ENCODE measurements at regions of chr4 and their contacts with region 1.

Region 1: DNA sequence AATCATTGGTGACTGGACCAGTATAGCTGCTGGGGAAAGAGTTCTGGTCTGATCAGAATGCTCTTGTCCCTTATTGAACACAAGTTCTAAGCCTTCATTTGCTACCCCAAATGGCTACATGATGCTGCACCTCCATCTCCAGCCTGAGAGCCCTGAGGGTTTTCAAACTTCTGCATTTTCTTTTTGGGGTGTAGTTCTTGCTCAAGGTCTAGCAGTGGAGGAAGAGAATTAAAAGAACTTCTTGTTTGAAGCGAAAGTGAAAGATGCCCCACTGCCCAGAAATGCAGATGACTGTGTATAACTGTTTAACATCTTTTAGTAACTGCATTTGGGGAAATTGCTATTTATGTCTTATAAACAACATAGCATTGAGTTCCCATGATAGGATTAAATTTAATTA is 38.5 kb downstream of the LAMTOR3 start:
- DNase-seq: no peak
- H3K4me3 Mint-ChIP-seq: peak overlapping the region; percentile 3
- H3K27ac Mint-ChIP-seq: peak overlapping the region; percentile 83
- H3K4me1 Mint-ChIP-seq: peaks cover 68% of the 10 kb centered on the region
- H3K27me3 Mint-ChIP-seq: no peaks in the 10 kb centered on the region

Region 2: GRCh38 chr4:99054428-99054994 is 801.2 kb before region 1 on chr4:
- intact Hi-C with region 1: loop called (anchors 2 kb)
- DNase-seq: no peak
- H3K4me3 Mint-ChIP-seq: no peak overlapping the region
- H3K27ac Mint-ChIP-seq: peak overlapping the region; percentile 75
- H3K4me1 Mint-ChIP-seq: peaks cover 41% of the 10 kb centered on the region
- H3K27me3 Mint-ChIP-seq: no peaks in the 10 kb centered on the region

Region 3: GRCh38 chr4:99504804-99505569 is 350.7 kb before region 1 on chr4:
- intact Hi-C with region 1: loop called (anchors 1 kb)
- DNase-seq: no peak
- H3K4me3 Mint-ChIP-seq: no peak overlapping the region
- H3K27ac Mint-ChIP-seq: no peak overlapping the region
- H3K4me1 Mint-ChIP-seq: peaks cover 32% of the 10 kb centered on the region
- H3K27me3 Mint-ChIP-seq: peaks cover 2% of the 10 kb centered on the region

Region 4: DNA sequence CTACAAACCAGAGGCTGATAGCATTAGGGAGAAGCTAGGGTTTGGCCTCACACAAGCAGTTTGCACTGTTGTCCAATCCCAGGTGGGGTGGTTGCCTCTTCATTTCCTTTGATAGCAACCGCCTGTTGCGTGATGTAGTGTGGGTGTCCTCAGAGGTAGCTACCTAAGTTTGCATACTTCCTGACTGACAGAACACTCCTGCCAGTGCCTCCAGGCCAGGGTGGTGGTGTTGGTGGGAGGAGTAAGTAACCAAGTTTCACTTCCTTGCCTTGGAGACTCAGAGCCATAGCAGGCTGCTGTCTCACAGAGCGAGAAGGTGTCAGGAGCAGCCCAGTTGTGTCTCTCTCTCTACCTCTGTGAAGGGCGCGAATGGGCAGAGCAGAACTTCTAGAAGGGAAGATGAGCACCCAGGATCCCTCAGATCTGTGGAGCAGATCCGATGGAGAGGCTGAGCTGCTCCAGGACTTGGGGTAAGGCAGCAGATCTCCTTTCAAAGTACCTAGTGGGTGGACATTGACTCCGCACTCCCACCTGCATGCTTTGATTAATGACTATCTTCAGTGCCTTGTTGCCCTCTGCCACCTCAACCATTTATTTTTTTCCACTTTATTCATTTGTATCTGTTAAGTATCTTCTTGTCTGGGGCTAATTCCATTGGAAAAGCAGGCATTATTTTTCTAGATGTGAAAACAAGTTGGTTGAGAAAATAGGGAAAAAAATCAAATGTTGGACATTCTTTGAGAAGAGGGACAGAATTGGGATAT is 39.0 kb before region 1 on chr4 and contains the start of gene DAPP1:
- intact Hi-C with region 1: loop called (anchors 1 kb)
- DNase-seq: peak; percentile 83
- H3K4me3 Mint-ChIP-seq: peak within 1 kb of the TSS; percentile 92
- H3K27ac Mint-ChIP-seq: peak within 1 kb of the TSS; percentile 94
- H3K4me1 Mint-ChIP-seq: peaks cover 73% of the 10 kb centered on the region
- H3K27me3 Mint-ChIP-seq: no peaks in the 10 kb centered on the region
- total RNA-seq, gene DAPP1: 21.4 and 23.6 TPM in 2 replicates

Region 5: DNA sequence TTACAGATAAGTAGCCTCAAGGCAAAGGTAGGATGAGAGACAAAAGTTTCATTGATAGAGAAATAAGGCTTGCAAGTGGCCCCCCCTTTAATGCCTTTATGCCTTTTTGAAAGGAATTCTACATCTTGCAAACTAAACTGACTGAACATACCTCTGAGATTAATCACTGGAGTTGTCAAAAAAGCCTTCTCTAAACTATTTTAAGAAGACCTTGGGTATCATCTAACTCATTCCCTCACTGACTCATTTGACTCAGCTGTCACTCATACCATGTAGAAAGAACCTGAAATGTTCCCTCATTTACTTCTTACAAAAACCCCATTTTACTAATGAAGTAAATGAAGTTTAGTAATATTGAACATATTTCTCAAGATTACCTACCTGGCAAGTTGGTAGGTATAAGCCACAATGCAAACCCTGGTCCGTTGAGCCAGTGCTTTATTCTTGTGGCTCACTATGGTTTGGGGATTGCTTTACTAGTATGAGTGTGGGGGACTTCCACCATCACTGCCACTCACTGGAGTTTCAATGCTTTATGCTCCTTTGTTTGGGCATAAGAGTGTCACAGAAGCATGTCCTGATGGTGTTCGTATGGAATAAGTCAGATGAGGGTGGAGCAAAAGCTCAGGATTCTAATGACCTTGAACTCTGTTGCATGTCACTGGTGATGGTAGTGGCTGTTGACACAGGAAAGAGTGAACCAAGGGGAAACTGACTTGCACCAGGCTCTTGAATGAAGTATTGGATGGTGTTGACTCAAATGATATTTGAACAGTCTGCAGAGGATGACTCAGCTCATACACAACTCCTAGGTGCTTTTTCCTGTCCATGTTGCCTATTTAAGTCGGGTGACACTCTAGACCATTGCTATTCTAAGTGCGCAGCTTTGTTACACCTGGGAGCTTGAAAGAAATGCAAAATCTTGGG is 967.7 kb after region 1 on chr4:
- intact Hi-C with region 1: loop called (anchors 5 kb)
- DNase-seq: peak; percentile 9
- H3K4me3 Mint-ChIP-seq: no peak overlapping the region
- H3K27ac Mint-ChIP-seq: peak overlapping the region; percentile 76
- H3K4me1 Mint-ChIP-seq: peaks cover 22% of the 10 kb centered on the region
- H3K27me3 Mint-ChIP-seq: no peaks in the 10 kb centered on the region

Measured in activated T-helper 2 cell treated with anti-CD3 and anti-CD28 coated beads, Interferon-gamma antibody, Interleukin-2, Interleukin-4, amounts not matched to agents 10 μg/mL and 5 μg/mL and 100 μg/mL, durations not matched to agents 14 hours and 24 hours and 36 hours (primary cell).